ENCODE measurements at regions of chr6 and their contacts with region 1.

Region 1: GRCh38 chr6:42745707-42746462 is at the start of gene TBCC:
- DNase-seq: peak; percentile 99
- ATAC-seq: peak; percentile 87
- H3K4me3 ChIP-seq: peak within 1 kb of the TSS; percentile 93 to 100 (median 99)
- H3K27ac ChIP-seq: peak within 1 kb of the TSS; percentile 93
- H3K4me1 ChIP-seq: peaks cover 44% of the 10 kb centered on the region
- H3K27me3 ChIP-seq: no peaks in the 10 kb centered on the region; a peak in 1 of 5 replicates
- CTCF ChIP-seq: no peak; the same call in 1 of the 2 replicates
- EP300 ChIP-seq: 0 out of 4 replicates have a peak, but pooled peaks of 1 of the 2 experiments have one; percentile 15
- POLR2A ChIP-seq: peak; percentile 97 to 100
- RAD21 ChIP-seq: 0 out of 2 replicates have a peak, but pooled peaks have one; percentile 4
- total RNA-seq, gene TBCC: 36.1 and 43.2 TPM in 2 replicates

Region 2: DNA sequence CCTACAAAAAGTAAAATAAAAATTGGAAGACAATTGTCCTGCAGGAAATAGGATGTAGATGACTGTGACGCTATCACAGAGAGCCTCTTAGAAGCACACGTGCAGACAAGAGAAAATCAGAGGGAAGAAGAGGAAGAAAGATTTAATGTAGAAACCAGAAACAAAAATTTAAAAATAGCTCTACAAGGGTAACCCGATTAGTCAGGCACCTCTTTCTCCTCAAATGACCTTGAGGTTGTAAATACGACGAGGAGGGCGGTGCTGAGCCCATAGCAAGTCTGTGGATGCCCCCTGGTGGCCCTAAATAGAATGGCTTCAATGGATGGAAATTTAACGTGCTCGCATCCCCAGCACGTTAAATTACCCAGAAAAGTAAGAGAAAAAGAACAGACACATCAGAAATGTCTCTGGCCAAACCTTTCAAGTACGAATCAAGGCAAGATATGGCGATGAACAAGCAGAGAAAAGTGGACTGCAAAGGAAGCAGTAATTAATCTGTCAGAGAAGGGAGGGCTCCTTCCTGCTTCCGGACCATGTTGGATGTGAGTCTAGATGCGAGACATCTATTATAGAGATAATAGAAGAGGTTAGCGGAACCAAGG is 19.3 kb before region 1 on chr6:
- CTCF ChIA-PET with region 1: no interaction called
- POLR2A ChIA-PET with region 1: interaction called, 20 read pairs
- in situ Hi-C with region 1: no loop called
- intact Hi-C with region 1: no loop called
- DNase-seq: peak; percentile 84
- ATAC-seq: peak; percentile 82
- H3K4me3 ChIP-seq: no peak overlapping the region
- H3K27ac ChIP-seq: no peak overlapping the region
- H3K4me1 ChIP-seq: peaks cover 20% of the 10 kb centered on the region
- H3K27me3 ChIP-seq: no peaks in the 10 kb centered on the region
- CTCF ChIP-seq: peak; percentile 94
- EP300 ChIP-seq: no peak
- POLR2A ChIP-seq: no peak
- RAD21 ChIP-seq: peak; percentile 90; the same call in 1 of the 2 replicates

Region 3: GRCh38 chr6:42782622-42783176 is 36.8 kb after region 1 on chr6:
- CTCF ChIA-PET with region 1: no interaction called
- POLR2A ChIA-PET with region 1: interaction called, 270 read pairs
- in situ Hi-C with region 1: loop called (anchors 5 kb)
- intact Hi-C with region 1: loop called (anchors 1 kb)
- DNase-seq: peak; percentile 83
- ATAC-seq: peak; percentile 60
- H3K4me3 ChIP-seq: peak overlapping the region; percentile 85 to 94 (median 92)
- H3K27ac ChIP-seq: peak overlapping the region; percentile 98
- H3K4me1 ChIP-seq: peaks cover 64% of the 10 kb centered on the region
- H3K27me3 ChIP-seq: no peaks in the 10 kb centered on the region; a peak in 1 of 5 replicates
- CTCF ChIP-seq: no peak
- EP300 ChIP-seq: no peak
- POLR2A ChIP-seq: peak; percentile 54 to 90
- RAD21 ChIP-seq: no peak

Region 4: DNA sequence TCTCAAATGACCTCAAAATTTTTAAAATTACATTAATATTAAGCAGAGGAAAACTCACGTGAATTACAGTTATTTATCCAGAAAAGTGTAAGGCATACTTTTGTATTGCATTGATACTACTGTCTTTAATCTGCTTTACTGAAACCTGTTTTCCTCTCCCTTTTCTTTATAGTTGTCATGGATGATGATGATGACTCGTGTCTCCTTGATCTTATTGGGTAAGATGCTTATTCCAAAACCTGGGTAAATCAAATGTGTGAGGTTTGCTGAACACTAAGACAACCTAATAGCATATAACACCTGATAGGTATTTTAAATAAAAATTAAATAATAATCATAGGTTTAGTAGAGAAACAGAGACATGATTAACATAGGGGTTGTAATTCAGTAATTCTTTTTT is 76.0 kb after region 1 on chr6:
- CTCF ChIA-PET with region 1: no interaction called
- POLR2A ChIA-PET with region 1: no interaction called
- in situ Hi-C with region 1: no loop called
- intact Hi-C with region 1: no loop called
- DNase-seq: no peak
- ATAC-seq: no peak
- H3K4me3 ChIP-seq: no peak overlapping the region
- H3K27ac ChIP-seq: no peak overlapping the region
- H3K4me1 ChIP-seq: no peaks in the 10 kb centered on the region
- H3K27me3 ChIP-seq: no peaks in the 10 kb centered on the region
- CTCF ChIP-seq: no peak
- EP300 ChIP-seq: no peak
- POLR2A ChIP-seq: no peak
- RAD21 ChIP-seq: no peak

Region 5: DNA sequence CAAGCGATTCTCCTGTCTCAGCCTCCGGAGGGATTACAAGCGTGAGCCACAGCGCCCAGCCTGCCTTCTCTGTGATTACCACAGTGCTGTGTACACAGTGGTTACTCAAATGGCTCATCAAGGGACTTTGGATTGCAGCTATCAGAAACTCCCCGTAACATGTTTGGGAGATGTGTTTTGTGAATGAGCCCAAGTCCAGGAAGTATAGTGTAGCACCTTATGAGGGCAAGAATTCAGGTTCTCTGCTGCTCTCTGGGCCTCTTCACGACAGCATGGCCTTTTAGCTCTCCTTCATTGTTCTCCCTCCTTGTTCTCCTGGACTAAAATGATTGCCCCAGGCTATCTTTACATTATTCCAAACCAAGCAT is 99.4 kb after region 1 on chr6:
- CTCF ChIA-PET with region 1: no interaction called
- POLR2A ChIA-PET with region 1: interaction called, 14 read pairs
- in situ Hi-C with region 1: no loop called
- intact Hi-C with region 1: no loop called
- DNase-seq: peak; percentile 94
- ATAC-seq: peak; percentile 100
- H3K4me3 ChIP-seq: 0 out of 6 replicates have a peak overlapping the region, but pooled peaks of 1 of the 3 experiments have one; percentile 7
- H3K27ac ChIP-seq: peak overlapping the region; percentile 75
- H3K4me1 ChIP-seq: peaks cover 26% of the 10 kb centered on the region
- H3K27me3 ChIP-seq: no peaks in the 10 kb centered on the region
- CTCF ChIP-seq: peak; percentile 32
- EP300 ChIP-seq: peak; percentile 63 to 73; a peak in 1 of 4 replicates
- POLR2A ChIP-seq: 0 out of 4 replicates have a peak, but pooled peaks of 1 of the 2 experiments have one; percentile 41
- RAD21 ChIP-seq: peak; percentile 60; the same call in 1 of the 2 replicates

Measured in HepG2 (cell line).